ENCODE measurements at regions of chr11 and their contacts with region 1.

Region 1: GRCh38 chr11:60899046-60899936 is 7.1 kb downstream of the PRPF19 start:
- DNase-seq: no peak
- H3K4me3 Mint-ChIP-seq: no peak overlapping the region
- H3K27ac Mint-ChIP-seq: no peak overlapping the region
- H3K4me1 Mint-ChIP-seq: peaks cover 11% of the 10 kb centered on the region
- H3K27me3 Mint-ChIP-seq: no peaks in the 10 kb centered on the region

Region 2: DNA sequence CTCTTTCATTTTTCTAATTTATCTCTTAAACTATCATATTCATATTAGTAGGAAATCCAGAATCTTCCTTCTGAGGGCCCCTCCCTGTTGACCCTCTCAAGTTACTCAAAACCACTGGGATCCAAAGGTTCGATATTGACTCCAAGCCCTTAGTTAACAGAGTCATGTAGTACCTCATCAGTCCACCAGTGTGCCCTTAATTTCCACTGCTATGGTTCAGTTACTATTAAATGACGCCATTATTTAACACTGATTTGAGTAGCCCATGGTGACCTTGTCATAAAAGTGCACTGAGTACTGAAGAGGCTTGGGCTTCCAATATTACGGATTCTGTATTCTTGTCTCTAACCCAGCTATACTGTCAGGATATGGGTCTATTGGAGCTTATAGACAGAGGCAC is 291.8 kb before region 1 on chr11:
- CTCF ChIA-PET with region 1: no interaction called
- POLR2A ChIA-PET with region 1: no interaction called
- intact Hi-C with region 1: no loop called
- DNase-seq: no peak
- H3K4me3 Mint-ChIP-seq: no peak overlapping the region
- H3K27ac Mint-ChIP-seq: no peak overlapping the region
- H3K4me1 Mint-ChIP-seq: peaks cover 6% of the 10 kb centered on the region
- H3K27me3 Mint-ChIP-seq: peaks cover 18% of the 10 kb centered on the region

Region 3: GRCh38 chr11:60775420-60775961 is 123.8 kb before region 1 on chr11:
- CTCF ChIA-PET with region 1: interaction called, 8 read pairs
- POLR2A ChIA-PET with region 1: no interaction called
- intact Hi-C with region 1: loop called (anchors 5 kb)
- DNase-seq: peak; percentile 89
- H3K4me3 Mint-ChIP-seq: no peak overlapping the region
- H3K27ac Mint-ChIP-seq: no peak overlapping the region
- H3K4me1 Mint-ChIP-seq: peaks cover 10% of the 10 kb centered on the region
- H3K27me3 Mint-ChIP-seq: peaks cover 4% of the 10 kb centered on the region

Region 4: GRCh38 chr11:60841797-60842667 is 57.3 kb before region 1 on chr11 and contains the start of gene CCDC86:
- CTCF ChIA-PET with region 1: interaction called, 12 read pairs
- POLR2A ChIA-PET with region 1: interaction called, 3 read pairs
- intact Hi-C with region 1: no loop called
- DNase-seq: peak; percentile 99
- H3K4me3 Mint-ChIP-seq: peak within 1 kb of the TSS; percentile 88
- H3K27ac Mint-ChIP-seq: peak within 1 kb of the TSS; percentile 85
- H3K4me1 Mint-ChIP-seq: peaks cover 36% of the 10 kb centered on the region
- H3K27me3 Mint-ChIP-seq: no peaks in the 10 kb centered on the region
- total RNA-seq, gene CCDC86: 40.6 to 42.1 TPM

Region 5: GRCh38 chr11:60887556-60887955 is 11.7 kb before region 1 on chr11:
- CTCF ChIA-PET with region 1: interaction called, 17 read pairs
- POLR2A ChIA-PET with region 1: interaction called, 4 read pairs
- intact Hi-C with region 1: no loop called
- DNase-seq: peak; percentile 47
- H3K4me3 Mint-ChIP-seq: no peak overlapping the region
- H3K27ac Mint-ChIP-seq: no peak overlapping the region
- H3K4me1 Mint-ChIP-seq: no peaks in the 10 kb centered on the region
- H3K27me3 Mint-ChIP-seq: no peaks in the 10 kb centered on the region